ENCODE measurements at regions of chr7 and their contacts with region 1.

Region 1: GRCh38 chr7:47945261-47946001 is 2.8 kb downstream of the PKD1L1 start:
- H3K4me3 ChIP-seq: no peak overlapping the region
- H3K27ac ChIP-seq: no peak overlapping the region
- H3K4me1 ChIP-seq: no peaks in the 10 kb centered on the region
- CTCF ChIP-seq: no peak

Region 2: GRCh38 chr7:47807756-47808155 is 137.7 kb before region 1 on chr7:
- CTCF ChIA-PET with region 1: no interaction called
- POLR2A ChIA-PET with region 1: no interaction called
- H3K4me3 ChIP-seq: no peak overlapping the region
- H3K27ac ChIP-seq: no peak overlapping the region
- H3K4me1 ChIP-seq: no peaks in the 10 kb centered on the region
- CTCF ChIP-seq: no peak

Region 3: GRCh38 chr7:47932016-47932415 is 13.4 kb before region 1 on chr7:
- CTCF ChIA-PET with region 1: interaction called, 18 read pairs
- POLR2A ChIA-PET with region 1: no interaction called
- H3K4me3 ChIP-seq: no peak overlapping the region
- H3K27ac ChIP-seq: no peak overlapping the region
- H3K4me1 ChIP-seq: no peaks in the 10 kb centered on the region
- CTCF ChIP-seq: no peak

Region 4: GRCh38 chr7:47968847-47969774 is 23.7 kb after region 1 on chr7:
- CTCF ChIA-PET with region 1: interaction called, 23 read pairs
- POLR2A ChIA-PET with region 1: no interaction called
- H3K4me3 ChIP-seq: no peak overlapping the region
- H3K27ac ChIP-seq: no peak overlapping the region
- H3K4me1 ChIP-seq: no peaks in the 10 kb centered on the region
- CTCF ChIP-seq: 0 out of 2 replicates have a peak, but pooled peaks have one; percentile 27

Region 5: GRCh38 chr7:48154792-48155413 is 209.5 kb after region 1 on chr7:
- CTCF ChIA-PET with region 1: interaction called, 35 read pairs
- POLR2A ChIA-PET with region 1: no interaction called
- H3K4me3 ChIP-seq: no peak overlapping the region
- H3K27ac ChIP-seq: no peak overlapping the region
- H3K4me1 ChIP-seq: no peaks in the 10 kb centered on the region
- CTCF ChIP-seq: no peak

Region 6: GRCh38 chr7:48244864-48245271 is 299.4 kb after region 1 on chr7:
- CTCF ChIA-PET with region 1: no interaction called
- POLR2A ChIA-PET with region 1: no interaction called
- H3K4me3 ChIP-seq: no peak overlapping the region
- H3K27ac ChIP-seq: no peak overlapping the region
- H3K4me1 ChIP-seq: no peaks in the 10 kb centered on the region
- CTCF ChIP-seq: no peak